Psoas muscle (tissue), 8 donors: ENCODE measurements at regions of chr1 and their contacts with region 1.

Region 1: DNA sequence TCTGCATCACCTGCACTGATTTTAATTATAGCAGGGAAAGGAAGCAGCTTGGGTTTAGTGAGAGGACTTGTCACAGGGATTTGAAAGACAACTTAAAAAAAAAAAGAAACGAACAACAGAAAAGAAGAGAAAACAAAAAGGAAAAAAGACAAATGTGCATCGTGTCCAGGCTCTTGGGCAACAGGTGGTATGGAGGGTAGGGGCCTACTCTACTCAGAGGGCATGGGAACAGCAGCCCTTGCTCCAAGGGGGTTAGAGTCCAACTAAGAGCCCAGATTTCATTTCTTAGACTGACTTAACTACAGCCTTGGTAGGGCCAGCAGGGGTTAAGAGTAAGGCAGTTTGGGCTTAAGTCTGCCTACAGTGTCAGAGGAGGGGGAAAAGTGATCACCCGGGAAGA is 15.3 kb upstream of the EXOSC10 start:
- DNase-seq: no peak
- ATAC-seq: no peak
- H3K4me3 ChIP-seq: no peak overlapping the region
- H3K27ac ChIP-seq: no peak overlapping the region
- H3K4me1 ChIP-seq: no peaks in the 10 kb centered on the region
- H3K27me3 ChIP-seq: no peaks in the 10 kb centered on the region
- CTCF ChIP-seq: no peak

Region 2: DNA sequence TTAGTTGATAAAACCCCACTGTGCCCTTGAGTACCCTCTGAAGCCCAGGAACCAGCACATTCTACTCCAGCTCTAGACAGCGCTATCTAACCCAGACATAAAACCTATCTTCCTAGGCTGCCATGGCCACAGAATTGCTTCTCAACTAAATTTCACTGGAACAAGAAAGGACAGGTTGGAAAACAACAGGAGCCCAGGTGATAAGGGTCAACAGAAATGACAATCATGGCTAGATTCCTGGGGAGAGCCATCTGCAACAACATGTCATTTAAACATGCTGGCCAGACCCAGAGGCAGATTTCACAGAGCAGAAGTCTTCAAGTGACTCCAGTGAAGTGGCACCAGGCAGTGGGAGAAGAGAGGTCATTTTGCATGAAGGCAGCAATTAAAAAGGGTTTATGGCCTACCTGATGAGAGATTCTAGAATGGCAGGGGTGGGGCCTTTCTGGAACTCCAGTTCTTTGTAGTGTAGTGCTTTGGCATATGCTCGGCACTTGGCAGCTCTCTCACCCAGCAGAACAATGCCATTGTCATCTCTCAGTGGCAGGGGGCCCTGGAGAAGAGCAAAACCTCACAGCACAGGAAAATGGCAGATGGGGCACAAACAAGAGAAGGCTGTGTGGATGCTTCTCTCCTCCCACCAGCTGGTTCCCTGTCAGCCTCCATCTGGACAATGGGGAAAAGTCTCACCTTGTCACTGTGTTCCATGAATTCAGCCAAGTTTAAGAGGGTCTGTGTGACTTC is 84.1 kb after region 1 on chr1:
- intact Hi-C with region 1: loop called in 1 of 2 experiments (anchors 2 kb)
- DNase-seq: no peak
- ATAC-seq: no peak
- H3K4me3 ChIP-seq: no peak overlapping the region
- H3K27ac ChIP-seq: no peak overlapping the region
- H3K4me1 ChIP-seq: no peaks in the 10 kb centered on the region
- H3K27me3 ChIP-seq: no peaks in the 10 kb centered on the region
- CTCF ChIP-seq: no peak